ENCODE measurements at regions of chr13 and their contacts with region 1.

Region 1: DNA sequence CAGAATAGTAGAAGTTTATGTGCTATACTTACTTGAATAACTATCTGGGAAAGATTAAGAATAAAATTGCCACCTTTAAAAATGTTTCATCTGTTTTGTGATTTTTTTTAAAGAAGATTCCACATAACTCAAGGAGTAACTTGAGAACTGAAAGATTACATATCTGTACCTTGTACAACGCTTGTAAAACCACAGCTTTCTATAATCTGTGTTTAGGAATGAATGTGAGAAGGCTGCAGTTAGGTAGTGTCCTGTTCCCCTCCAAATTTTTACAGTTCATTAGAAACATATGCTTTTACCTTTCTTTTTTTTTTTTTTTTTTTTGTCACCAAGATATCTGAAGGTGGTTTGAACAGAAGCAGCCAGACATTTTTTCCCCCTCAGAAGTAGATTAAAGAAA is 312.8 kb upstream of the GPC6 start:
- DNase-seq: no peak
- ATAC-seq: peak; percentile 41; the same call in 1 of the 3 replicates
- H3K4me3 ChIP-seq: no peak overlapping the region
- H3K27ac ChIP-seq: no peak overlapping the region
- H3K4me1 ChIP-seq: no peaks in the 10 kb centered on the region
- H3K27me3 ChIP-seq: no peaks in the 10 kb centered on the region
- CTCF ChIP-seq: no peak
- EP300 ChIP-seq: no peak
- POLR2A ChIP-seq: no peak
- RAD21 ChIP-seq: no peak

Region 2: DNA sequence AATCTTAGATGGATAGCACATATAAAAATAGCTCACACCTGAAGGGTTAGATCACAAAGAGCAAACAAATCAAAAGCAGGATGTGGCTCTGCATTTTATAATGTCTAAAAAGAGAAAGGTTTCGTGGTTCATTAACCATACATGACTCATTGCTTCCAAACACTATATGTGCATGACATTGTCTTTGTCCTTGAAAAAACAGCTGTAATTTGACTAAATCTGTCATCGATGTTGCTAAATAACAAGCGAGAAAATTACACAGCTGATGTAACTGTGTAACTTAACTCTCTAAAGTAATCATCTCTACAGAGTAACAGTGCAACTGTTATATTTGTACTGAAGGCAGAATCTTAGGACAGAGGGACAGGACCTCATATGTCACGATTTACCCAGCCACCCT is 70.3 kb before region 1 on chr13:
- CTCF ChIA-PET with region 1: no interaction called
- POLR2A ChIA-PET with region 1: no interaction called
- RAD21 ChIA-PET with region 1: no interaction called
- SMC1A ChIA-PET with region 1: no interaction called
- in situ Hi-C with region 1: no loop called
- intact Hi-C with region 1: no loop called
- DNase-seq: no peak
- ATAC-seq: peak; percentile 81
- H3K4me3 ChIP-seq: no peak overlapping the region
- H3K27ac ChIP-seq: no peak overlapping the region
- H3K4me1 ChIP-seq: no peaks in the 10 kb centered on the region
- H3K27me3 ChIP-seq: no peaks in the 10 kb centered on the region
- CTCF ChIP-seq: no peak
- EP300 ChIP-seq: peak; percentile 49 to 52; a peak in 2 of 4 replicates
- POLR2A ChIP-seq: no peak
- RAD21 ChIP-seq: no peak

Region 3: DNA sequence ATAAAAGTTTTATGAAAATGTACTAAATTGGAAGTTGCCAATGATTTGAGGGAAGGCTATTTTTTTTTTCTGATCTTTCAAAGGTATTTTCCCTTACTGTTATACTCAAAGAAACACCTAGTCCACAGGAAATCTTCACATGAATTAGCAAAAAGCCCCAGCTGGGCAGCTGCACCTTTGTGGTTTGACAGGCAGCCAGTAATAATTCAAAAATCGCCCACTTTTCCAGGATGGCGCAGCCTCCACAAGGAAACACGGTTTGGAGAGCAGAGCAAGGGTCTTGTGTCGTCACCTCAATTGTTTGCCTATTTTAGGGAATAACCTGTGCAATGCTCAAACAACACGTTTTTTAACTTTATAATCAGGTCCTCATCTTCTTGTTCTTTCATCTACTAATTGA is 12.1 kb before region 1 on chr13:
- CTCF ChIA-PET with region 1: interaction called, 10 read pairs
- POLR2A ChIA-PET with region 1: no interaction called
- RAD21 ChIA-PET with region 1: interaction called, 28 read pairs
- SMC1A ChIA-PET with region 1: interaction called, 36 read pairs
- in situ Hi-C with region 1: no loop called
- intact Hi-C with region 1: no loop called
- DNase-seq: no peak
- ATAC-seq: no peak
- H3K4me3 ChIP-seq: no peak overlapping the region
- H3K27ac ChIP-seq: no peak overlapping the region
- H3K4me1 ChIP-seq: no peaks in the 10 kb centered on the region
- H3K27me3 ChIP-seq: no peaks in the 10 kb centered on the region
- CTCF ChIP-seq: no peak
- EP300 ChIP-seq: no peak
- POLR2A ChIP-seq: no peak
- RAD21 ChIP-seq: no peak

Region 4: DNA sequence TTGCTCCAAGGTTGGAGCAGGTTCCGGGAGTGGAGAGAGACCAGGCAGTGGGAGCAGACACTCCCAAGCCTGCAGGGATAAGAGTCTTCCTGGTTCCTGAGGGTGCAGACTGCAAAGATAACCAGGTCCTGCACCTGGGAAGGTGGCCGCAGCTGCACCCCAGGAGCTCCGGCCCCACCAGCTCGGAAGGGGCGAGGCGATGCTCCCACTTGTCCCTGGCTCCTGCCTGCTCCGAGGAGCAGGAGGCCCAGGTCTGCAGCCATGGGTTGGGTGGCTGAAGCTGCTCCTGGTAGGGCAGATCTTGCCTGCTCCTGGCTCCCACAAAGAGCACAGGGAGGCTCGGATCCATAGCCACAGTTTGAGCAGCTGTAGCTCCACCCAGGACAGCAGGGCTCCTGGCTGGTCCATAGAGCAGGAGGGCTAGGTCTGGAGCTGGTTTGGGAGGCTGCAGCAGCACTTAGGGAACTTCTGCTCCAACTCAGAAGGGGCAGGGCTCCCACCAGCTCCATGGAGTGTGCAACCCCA is 61.1 kb after region 1 on chr13:
- CTCF ChIA-PET with region 1: no interaction called
- POLR2A ChIA-PET with region 1: no interaction called
- RAD21 ChIA-PET with region 1: no interaction called
- SMC1A ChIA-PET with region 1: no interaction called
- in situ Hi-C with region 1: no loop called
- intact Hi-C with region 1: no loop called
- DNase-seq: no peak
- ATAC-seq: no peak
- H3K4me3 ChIP-seq: no peak overlapping the region
- H3K27ac ChIP-seq: no peak overlapping the region
- H3K4me1 ChIP-seq: no peaks in the 10 kb centered on the region
- H3K27me3 ChIP-seq: no peaks in the 10 kb centered on the region
- CTCF ChIP-seq: no peak
- EP300 ChIP-seq: no peak
- POLR2A ChIP-seq: no peak
- RAD21 ChIP-seq: no peak

Measured in GM12878 (cell line).